Activated T-helper 1 cell treated with anti-CD3 and anti-CD28 coated beads, Interleukin-12 subunit alpha, Interleukin-12 subunit beta, Interleukin-2, Interleukin-4 antibody, amounts not matched to agents 30 ng/mL and 10 ng/mL and 1 ng/mL, durations not matched to agents 14 hours and 24 hours and 36 hours (primary cell): ENCODE measurements at regions of chr4 and their contacts with region 1.

Region 1: DNA sequence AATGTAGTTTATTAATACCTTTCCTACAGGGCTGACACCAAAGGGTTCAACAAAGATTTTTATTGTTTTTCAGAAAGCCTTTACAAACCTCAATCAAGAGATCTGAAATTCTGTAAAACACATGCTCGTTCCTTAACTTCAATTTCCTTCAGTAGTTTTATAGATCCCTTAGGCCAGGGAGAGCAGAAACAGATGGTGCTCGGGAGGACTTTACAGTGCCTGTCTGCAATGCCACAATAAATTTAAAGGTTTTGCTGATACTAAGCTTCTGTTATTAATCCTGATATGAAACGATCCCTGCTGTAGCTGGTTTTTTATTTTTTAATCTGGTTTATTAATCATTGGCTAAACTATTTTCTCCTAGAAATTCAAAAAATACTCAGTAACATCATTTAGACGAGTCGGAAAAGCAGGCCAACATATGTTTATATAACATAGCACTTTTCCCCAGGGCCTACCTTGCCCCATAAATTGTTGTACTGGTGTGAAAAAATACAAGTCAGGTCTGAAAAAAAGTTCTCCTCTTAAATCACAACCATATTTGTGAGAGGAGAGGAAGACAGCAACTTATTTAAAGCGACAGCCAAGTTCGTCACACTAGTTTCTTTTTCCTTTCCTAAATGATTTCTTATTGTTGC is 39.8 kb downstream of the SHISA3 start:
- DNase-seq: no peak
- H3K4me3 Mint-ChIP-seq: no peak overlapping the region
- H3K27ac Mint-ChIP-seq: no peak overlapping the region
- H3K4me1 Mint-ChIP-seq: no peaks in the 10 kb centered on the region
- H3K27me3 Mint-ChIP-seq: no peaks in the 10 kb centered on the region

Region 2: DNA sequence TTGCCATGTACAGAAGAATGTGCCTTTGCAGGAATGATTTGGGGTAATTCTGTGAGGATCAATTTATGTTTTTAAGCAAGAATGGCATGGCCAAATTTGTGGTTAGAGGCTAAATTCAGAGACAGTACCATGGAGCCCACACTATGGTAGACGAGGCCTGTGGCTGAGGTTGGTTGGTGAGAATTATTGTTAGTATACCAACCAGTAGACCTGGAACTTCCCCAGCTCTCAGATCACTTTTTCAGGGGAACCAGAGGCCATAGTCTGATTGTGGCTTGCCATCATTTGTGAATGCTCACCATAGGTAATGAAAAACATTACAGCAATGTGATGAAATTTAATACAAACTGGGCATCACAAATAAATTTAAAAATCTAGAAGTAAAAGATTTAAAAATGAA is 16.6 kb after region 1 on chr4:
- intact Hi-C with region 1: loop called (anchors 2 kb)
- DNase-seq: no peak
- H3K4me3 Mint-ChIP-seq: no peak overlapping the region
- H3K27ac Mint-ChIP-seq: no peak overlapping the region
- H3K4me1 Mint-ChIP-seq: no peaks in the 10 kb centered on the region
- H3K27me3 Mint-ChIP-seq: no peaks in the 10 kb centered on the region